Activated T-helper 1 cell treated with anti-CD3 and anti-CD28 coated beads, Interleukin-12 subunit alpha, Interleukin-12 subunit beta, Interleukin-2, Interleukin-4 antibody, amounts not matched to agents 30 ng/mL and 10 ng/mL and 1 ng/mL, durations not matched to agents 14 hours and 24 hours and 36 hours (primary cell): ENCODE measurements at regions of chr4 and their contacts with region 1.

Region 1: DNA sequence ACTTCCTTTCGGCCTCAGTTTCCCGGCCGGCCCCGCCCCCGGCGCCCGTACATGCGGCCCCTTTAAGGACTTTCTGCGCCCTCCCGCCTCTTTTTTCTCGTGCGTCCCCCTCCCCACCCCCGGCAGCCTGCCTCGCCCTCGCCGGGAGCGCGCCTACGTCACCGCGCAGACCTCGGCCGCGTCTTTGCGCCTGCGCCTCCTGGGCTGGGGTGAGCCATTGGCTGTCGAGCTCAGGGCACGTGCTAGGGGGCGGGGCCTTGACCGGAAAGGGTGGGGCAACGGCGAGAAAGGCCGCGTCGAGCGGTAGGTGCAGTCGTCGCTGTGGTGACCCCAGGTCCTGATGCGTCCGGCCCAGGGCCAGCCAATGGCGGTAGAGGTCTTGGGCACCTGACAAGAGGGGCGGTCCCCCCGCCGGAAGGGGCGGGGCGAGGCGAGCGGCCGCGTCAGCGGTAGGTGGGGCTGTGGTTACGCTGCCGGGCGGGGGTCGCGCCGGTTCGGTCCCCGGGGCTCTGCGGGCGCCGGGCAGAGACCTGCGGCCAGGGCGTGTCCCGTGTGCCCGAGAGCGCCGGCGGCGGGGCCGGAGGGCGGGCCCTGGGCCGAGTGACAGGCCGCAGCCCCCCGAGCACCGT is at the start of gene UVSSA:
- DNase-seq: peak; percentile 100
- H3K4me3 Mint-ChIP-seq: peak within 1 kb of the TSS; percentile 92
- H3K27ac Mint-ChIP-seq: peak within 1 kb of the TSS; percentile 92
- H3K4me1 Mint-ChIP-seq: peaks cover 32% of the 10 kb centered on the region
- H3K27me3 Mint-ChIP-seq: peaks cover 2% of the 10 kb centered on the region
- total RNA-seq, gene UVSSA: 25.8 and 27.5 TPM in 2 replicates

Region 2: GRCh38 chr4:931960-932712 is 414.8 kb before region 1 on chr4 and contains the starts of genes GAK and TMEM175:
- intact Hi-C with region 1: loop called (anchors 1 kb)
- DNase-seq: peak; percentile 99
- H3K4me3 Mint-ChIP-seq: peak within 1 kb of the TSS; percentile 97
- H3K27ac Mint-ChIP-seq: peak within 1 kb of the TSS; percentile 90
- H3K4me1 Mint-ChIP-seq: peaks cover 34% of the 10 kb centered on the region
- H3K27me3 Mint-ChIP-seq: no peaks in the 10 kb centered on the region
- total RNA-seq, gene GAK: 146 and 149 TPM in 2 replicates
- total RNA-seq, gene TMEM175: 15.4 and 16.2 TPM in 2 replicates

Region 3: GRCh38 chr4:1167247-1167949 is 179.5 kb before region 1 on chr4:
- intact Hi-C with region 1: loop called (anchors 1 kb)
- DNase-seq: peak; percentile 83
- H3K4me3 Mint-ChIP-seq: peak overlapping the region; percentile 79
- H3K27ac Mint-ChIP-seq: peak overlapping the region; percentile 69
- H3K4me1 Mint-ChIP-seq: peaks cover 15% of the 10 kb centered on the region
- H3K27me3 Mint-ChIP-seq: peaks cover 13% of the 10 kb centered on the region

Region 4: DNA sequence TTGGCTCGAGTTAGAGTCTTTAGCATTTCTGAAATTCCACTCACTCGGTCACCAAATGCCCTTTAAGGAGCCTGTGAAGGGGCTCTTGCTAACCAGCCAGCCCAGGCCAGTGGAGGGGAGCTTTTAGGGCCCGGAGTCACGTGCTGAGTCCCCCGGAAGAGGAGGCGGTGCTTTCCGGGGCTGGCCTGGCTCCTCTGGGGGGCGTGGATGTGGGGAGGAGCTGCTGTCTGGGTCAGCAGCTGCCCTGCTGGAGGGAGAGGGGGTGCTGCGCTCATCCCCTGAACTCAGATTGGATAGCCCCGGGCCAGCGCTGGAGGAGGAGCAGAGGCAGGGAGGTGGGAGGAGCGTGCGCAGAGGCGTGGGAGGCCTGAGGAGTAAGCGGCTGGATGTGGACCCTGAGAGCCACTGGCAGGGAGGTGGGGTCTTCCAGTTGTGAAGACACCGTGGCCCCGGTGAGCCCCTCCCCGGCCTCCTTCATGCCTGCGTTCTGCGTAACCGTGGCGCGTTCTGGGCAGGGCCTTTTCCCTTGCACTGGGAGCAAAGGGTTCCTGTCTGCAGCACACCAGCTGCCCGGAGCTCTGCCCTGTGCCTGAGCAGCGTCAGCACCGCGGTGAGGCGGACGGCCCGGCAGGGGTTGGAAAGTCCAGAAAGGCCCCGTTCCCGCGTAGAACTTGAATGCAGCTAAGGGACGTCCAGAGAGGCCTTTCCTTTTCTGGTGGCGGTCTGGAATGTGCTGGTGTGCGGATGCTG is 37.5 kb before region 1 on chr4:
- intact Hi-C with region 1: loop called (anchors 5 kb)
- DNase-seq: peak; percentile 41
- H3K4me3 Mint-ChIP-seq: peak overlapping the region; percentile 49
- H3K27ac Mint-ChIP-seq: peak overlapping the region; percentile 36
- H3K4me1 Mint-ChIP-seq: peaks cover 52% of the 10 kb centered on the region
- H3K27me3 Mint-ChIP-seq: no peaks in the 10 kb centered on the region

Region 5: GRCh38 chr4:1321486-1321885 is 25.4 kb before region 1 on chr4:
- intact Hi-C with region 1: no loop called
- DNase-seq: no peak
- H3K4me3 Mint-ChIP-seq: no peak overlapping the region
- H3K27ac Mint-ChIP-seq: no peak overlapping the region
- H3K4me1 Mint-ChIP-seq: no peaks in the 10 kb centered on the region
- H3K27me3 Mint-ChIP-seq: no peaks in the 10 kb centered on the region

Region 6: DNA sequence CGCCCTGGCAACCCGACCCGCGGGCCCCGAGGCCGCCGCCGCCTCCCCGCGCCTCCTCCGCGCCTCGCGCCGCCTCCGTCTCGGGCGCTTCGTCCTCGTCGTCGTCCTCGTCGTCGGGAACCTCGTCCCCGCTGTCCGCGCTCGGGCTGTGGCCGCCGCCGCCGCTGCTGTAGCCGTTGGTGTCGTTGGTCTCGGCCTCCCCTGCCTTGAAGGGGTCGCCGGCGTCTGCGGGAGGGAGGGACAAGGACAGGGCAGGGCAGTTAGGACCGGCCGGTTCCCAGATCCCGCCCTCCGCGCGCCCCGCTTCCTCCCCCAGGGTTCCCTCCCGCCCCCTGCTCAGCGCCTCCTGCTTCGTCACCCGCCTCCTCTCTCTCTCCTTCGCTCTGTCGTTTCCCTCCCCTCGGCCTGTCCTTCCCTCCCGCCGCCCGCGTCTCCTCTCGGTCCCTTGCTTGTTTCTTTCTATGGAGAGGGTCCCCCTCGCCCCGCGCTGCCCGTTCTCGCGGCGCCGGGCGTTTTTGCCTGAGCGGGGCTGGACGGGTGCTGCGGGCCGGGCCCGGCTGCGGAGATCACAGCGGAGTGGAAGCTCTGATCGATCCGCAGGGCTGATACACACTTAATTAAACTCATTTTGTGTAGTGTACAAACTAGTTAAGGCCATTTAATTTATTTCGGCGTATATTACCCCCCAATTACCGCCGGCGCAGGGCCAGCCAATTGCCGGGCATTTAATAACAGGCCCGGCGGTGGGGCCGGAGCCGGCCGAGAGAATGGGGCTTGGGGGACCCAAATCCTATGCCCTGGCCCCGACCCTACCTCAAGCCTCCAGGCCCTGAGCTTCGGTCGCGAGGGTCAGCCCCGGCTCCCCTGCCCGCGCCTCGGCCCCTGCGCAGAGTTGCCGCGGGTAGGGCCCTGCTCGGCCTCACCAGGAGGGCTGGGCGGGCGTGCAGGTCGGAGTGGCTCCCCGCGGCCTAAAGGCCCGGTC is 57.0 kb after region 1 on chr4:
- intact Hi-C with region 1: no loop called
- DNase-seq: no peak
- H3K4me3 Mint-ChIP-seq: no peak overlapping the region
- H3K27ac Mint-ChIP-seq: no peak overlapping the region
- H3K4me1 Mint-ChIP-seq: no peaks in the 10 kb centered on the region
- H3K27me3 Mint-ChIP-seq: peaks cover 25% of the 10 kb centered on the region

Region 7: GRCh38 chr4:1683736-1684505 is 337.0 kb after region 1 on chr4 and contains the start of gene FAM53A:
- intact Hi-C with region 1: loop called (anchors 2 kb)
- DNase-seq: peak; percentile 93
- H3K4me3 Mint-ChIP-seq: peak within 1 kb of the TSS; percentile 87
- H3K27ac Mint-ChIP-seq: peak within 1 kb of the TSS; percentile 90
- H3K4me1 Mint-ChIP-seq: peaks cover 12% of the 10 kb centered on the region
- H3K27me3 Mint-ChIP-seq: peaks cover 2% of the 10 kb centered on the region
- total RNA-seq, gene FAM53A: 2.5 and 5.5 TPM in 2 replicates

Region 8: DNA sequence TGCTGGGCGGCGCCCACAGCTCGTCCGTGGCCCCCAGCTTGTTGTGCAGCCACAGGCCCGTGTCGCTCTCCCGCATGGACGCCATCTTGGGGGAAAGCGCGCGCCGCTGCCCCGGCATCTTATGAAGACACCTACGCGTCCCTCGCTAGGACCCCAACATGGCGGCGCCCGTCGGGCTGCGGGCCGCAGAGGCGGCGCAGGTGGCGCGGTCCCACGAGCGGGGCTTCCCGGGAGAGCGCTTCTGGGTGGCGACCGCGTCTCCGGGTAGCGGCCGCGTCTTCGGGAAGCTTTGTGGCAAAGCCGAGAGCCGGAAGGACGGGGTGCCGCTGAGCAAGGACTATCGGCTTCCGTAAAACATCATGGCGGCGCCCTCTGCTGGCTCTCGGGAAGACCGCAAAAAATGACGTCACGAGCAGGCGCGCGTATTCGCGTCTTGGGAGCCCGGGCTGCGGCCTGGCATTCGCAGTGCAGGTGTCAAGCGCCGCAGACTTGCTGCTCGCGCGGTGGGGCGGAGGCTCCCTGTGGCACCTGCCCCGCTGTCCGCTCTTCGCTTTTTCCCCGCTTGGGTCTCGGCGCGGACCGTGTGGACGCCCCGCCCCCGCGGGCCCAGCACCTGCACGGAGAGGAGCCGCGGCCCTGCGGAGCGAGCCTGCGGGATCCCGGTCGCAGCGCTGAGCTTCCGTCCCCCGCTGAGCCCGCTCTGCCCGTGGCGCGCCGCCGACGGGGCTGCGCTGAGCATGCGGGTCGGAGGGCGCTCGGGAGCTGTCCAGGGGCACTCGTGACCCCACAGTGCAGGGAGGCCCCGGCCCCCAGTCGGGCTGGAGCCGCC is 662.2 kb after region 1 on chr4 and contains the start of gene NELFA:
- intact Hi-C with region 1: loop called (anchors 2 kb)
- DNase-seq: peak; percentile 91
- H3K4me3 Mint-ChIP-seq: peak within 1 kb of the TSS; percentile 92
- H3K27ac Mint-ChIP-seq: peak within 1 kb of the TSS; percentile 88
- H3K4me1 Mint-ChIP-seq: peaks cover 31% of the 10 kb centered on the region
- H3K27me3 Mint-ChIP-seq: peaks cover 18% of the 10 kb centered on the region
- total RNA-seq, gene NELFA: 52.9 and 55.4 TPM in 2 replicates